Activated CD4-positive, alpha-beta T cell treated with anti-CD3 and anti-CD28 coated beads for 36 hours (primary cell): ENCODE measurements at regions of chr7 and their contacts with region 1.

Region 1: DNA sequence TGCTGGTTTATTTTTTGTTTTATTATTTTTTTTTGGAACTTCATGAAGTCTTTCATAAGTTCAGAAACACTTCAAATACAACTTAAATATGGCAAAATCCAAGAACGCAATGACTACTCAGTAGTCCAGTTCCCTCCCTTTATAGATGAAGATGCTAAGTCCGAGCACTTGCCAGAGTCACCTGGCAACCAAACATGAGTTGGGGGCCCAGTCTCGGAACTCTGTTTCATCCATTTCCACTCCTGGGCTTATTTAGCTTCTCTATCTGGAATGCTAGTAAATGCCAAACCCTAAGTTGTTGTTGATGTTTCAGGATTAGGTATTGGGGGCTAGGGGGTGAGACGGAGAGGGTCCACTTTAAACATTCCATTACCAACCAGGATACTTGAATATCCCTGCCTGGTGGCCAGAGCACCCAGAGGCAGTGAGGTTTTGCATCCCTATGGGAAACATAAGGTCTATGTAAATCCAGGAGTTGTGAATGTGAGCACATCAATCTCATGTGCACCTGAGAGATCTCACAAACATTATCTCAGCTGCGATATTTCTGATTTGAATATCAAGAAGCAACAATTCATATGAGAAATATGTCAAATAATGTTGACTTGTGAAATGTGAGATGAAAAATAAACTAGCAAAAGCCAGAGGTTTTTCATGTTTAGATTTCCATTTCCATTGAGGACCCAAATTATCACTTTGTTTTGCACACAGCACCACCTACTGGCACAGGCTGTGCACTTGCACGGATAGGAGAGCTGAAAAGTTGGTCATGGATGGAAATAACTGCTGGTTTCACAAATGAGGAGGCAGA is 129.3 kb downstream of the PKD1L1 start:
- DNase-seq: peak; percentile 75
- ATAC-seq: peak; percentile 44
- H3K4me3 Mint-ChIP-seq: no peak overlapping the region
- H3K27ac Mint-ChIP-seq: no peak overlapping the region
- H3K4me1 Mint-ChIP-seq: no peaks in the 10 kb centered on the region
- H3K27me3 Mint-ChIP-seq: no peaks in the 10 kb centered on the region

Region 2: GRCh38 chr7:47266131-47266706 is 552.8 kb before region 1 on chr7:
- CTCF ChIA-PET with region 1: interaction called, 23 read pairs
- POLR2A ChIA-PET with region 1: no interaction called
- intact Hi-C with region 1: loop called (anchors 1 kb)
- DNase-seq: peak; percentile 70
- ATAC-seq: peak; percentile 39
- H3K4me3 Mint-ChIP-seq: no peak overlapping the region
- H3K27ac Mint-ChIP-seq: no peak overlapping the region
- H3K4me1 Mint-ChIP-seq: no peaks in the 10 kb centered on the region
- H3K27me3 Mint-ChIP-seq: peaks cover 4% of the 10 kb centered on the region